GM12878 (cell line): ENCODE measurements at regions of chr9 and their contacts with region 1.

Region 1: GRCh38 chr9:4740638-4741364 is at the start of gene AK3:
- DNase-seq: no peak
- ATAC-seq: peak; percentile 94
- H3K4me3 ChIP-seq: peak within 1 kb of the TSS; percentile 92
- H3K27ac ChIP-seq: peak within 1 kb of the TSS; percentile 80
- H3K4me1 ChIP-seq: peaks cover 8% of the 10 kb centered on the region
- H3K27me3 ChIP-seq: no peaks in the 10 kb centered on the region
- CTCF ChIP-seq: peak in 2 of 3 experiments; percentile 9 to 54; a peak in 3 of 6 replicates
- EP300 ChIP-seq: no peak
- POLR2A ChIP-seq: peak; percentile 92
- RAD21 ChIP-seq: peak; percentile 34; the same call in 1 of the 2 replicates
- polyA plus RNA-seq, gene AK3: 14.2 to 26.2 TPM

Region 2: DNA sequence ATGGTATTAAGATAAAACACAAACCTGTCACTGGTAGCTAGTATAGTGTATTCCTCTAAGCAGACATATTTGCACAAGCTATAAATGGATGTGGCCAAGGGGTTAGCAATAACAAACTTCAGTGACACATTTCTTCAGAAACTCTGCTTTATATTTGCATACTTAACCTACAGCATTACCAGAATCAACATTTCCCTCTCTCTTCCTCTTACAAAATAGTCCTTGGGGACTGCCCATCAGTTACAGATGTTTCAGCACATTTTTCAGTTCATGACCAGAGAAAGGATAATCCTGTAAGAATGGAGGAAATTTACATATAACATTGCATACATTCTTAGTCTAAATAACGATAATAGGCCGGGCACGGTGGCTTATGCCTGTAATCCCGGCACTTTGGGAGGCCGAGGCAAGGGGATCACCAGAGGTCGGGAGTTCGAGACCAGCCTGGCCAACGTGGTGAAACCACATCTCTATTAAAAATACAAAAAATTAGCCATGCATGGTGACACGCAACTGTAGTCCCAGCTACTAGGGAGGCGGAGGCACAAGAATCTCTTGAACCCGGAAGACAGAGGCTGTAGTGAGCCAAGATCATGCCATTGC is 275.8 kb before region 1 on chr9:
- CTCF ChIA-PET with region 1: no interaction called
- POLR2A ChIA-PET with region 1: no interaction called
- RAD21 ChIA-PET with region 1: no interaction called
- SMC1A ChIA-PET with region 1: no interaction called
- in situ Hi-C with region 1: no loop called
- intact Hi-C with region 1: loop called (anchors 2 kb)
- DNase-seq: peak; percentile 96
- ATAC-seq: peak; percentile 97
- H3K4me3 ChIP-seq: peak overlapping the region; percentile 25; the same call in 1 of the 2 replicates
- H3K27ac ChIP-seq: peak overlapping the region; percentile 98
- H3K4me1 ChIP-seq: peaks cover 21% of the 10 kb centered on the region; the same call in 1 of the 2 replicates
- H3K27me3 ChIP-seq: no peaks in the 10 kb centered on the region
- CTCF ChIP-seq: no peak
- EP300 ChIP-seq: peak; percentile 95 to 98
- POLR2A ChIP-seq: no peak
- RAD21 ChIP-seq: no peak

Region 3: DNA sequence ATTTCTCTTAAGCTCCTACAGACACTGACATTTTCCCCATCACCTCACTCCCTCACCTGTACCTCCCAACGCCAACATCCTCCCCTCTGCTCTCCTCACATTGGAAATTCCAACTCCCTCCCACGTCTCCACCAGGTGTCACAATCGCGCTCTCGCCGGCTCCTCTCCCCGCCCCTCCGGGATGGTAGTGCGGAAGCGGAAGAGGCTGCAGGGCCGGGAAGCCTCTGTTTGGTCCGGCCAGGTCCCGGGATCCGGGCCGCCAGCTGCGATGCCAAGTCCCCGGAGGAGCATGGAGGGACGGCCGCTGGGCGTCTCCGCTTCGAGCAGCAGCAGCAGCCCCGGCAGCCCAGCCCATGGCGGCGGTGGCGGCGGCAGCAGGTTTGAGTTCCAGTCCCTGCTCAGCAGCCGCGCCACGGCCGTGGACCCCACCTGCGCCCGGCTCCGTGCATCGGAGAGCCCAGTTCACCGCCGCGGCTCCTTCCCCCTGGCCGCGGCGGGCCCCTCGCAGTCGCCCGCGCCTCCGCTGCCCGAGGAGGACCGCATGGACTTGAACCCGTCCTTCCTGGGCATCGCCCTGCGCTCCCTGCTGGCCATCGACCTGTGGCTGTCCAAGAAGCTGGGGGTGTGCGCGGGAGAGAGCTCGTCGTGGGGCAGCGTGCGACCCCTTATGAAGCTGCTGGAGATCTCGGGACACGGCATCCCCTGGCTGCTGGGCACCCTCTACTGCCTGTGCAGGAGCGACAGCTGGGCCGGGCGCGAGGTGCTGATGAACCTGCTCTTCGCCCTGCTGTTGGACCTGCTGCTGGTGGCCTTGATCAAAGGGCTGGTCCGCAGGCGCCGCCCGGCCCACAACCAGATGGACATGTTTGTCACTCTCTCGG is 78.5 kb before region 1 on chr9 and contains the start of gene PLPP6:
- CTCF ChIA-PET with region 1: interaction called, 14 read pairs
- POLR2A ChIA-PET with region 1: interaction called, 4 read pairs
- RAD21 ChIA-PET with region 1: interaction called, 11 read pairs
- SMC1A ChIA-PET with region 1: interaction called, 6 read pairs
- in situ Hi-C with region 1: no loop called
- intact Hi-C with region 1: no loop called
- DNase-seq: peak; percentile 52
- ATAC-seq: peak; percentile 91
- H3K4me3 ChIP-seq: peak within 1 kb of the TSS; percentile 85
- H3K27ac ChIP-seq: peak within 1 kb of the TSS; percentile 68
- H3K4me1 ChIP-seq: peaks cover 21% of the 10 kb centered on the region
- H3K27me3 ChIP-seq: no peaks in the 10 kb centered on the region
- CTCF ChIP-seq: peak; percentile 52 to 85 (median 61)
- EP300 ChIP-seq: no peak
- POLR2A ChIP-seq: peak; percentile 90
- RAD21 ChIP-seq: peak; percentile 65
- polyA plus RNA-seq, gene PLPP6: 1.6 to 3.5 TPM

Region 4: DNA sequence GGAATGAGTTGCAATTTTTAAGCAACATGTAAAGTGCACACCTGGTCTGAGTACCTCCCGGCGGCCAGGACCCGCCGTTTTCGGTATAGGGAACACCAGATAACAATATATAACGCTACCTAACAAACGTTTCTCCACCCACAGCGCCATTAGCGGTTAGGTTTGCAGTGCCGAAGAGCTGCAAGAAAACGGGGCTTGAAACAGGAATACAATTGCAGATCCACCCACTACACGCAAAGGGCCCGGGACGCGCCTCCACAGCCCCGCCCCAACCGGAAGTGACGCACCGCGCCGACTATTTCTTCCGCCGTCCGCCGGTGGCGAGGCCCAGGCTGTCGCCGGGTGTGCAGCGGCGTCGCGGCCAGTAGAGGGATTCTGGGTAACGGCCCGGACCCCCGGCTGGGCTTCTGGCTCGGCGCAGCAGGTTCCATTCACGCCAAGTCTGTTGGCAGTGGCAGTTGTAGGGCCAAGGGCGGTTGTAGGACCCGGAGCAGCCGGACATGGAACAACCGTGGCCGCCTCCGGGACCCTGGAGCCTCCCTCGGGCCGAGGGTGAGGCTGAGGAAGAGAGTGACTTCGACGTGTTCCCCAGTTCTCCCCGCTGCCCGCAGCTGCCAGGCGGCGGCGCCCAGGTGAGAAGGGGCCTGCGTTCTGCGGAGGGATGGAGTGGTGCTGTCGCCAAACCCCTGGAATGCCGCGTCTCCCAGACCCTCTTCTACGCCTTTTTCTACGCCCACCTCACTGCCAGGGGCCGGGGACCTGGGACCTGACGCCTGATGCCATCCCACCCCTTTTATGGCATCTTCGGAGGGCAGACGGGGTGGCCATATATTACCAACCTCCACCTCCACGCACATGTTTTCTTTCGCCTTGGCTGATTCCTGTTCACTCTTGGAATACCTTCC is 61.3 kb before region 1 on chr9 and contains the start of gene CDC37L1:
- CTCF ChIA-PET with region 1: interaction called, 6 read pairs
- POLR2A ChIA-PET with region 1: interaction called, 5 read pairs
- RAD21 ChIA-PET with region 1: interaction called, 7 read pairs
- SMC1A ChIA-PET with region 1: interaction called, 4 read pairs
- in situ Hi-C with region 1: no loop called
- intact Hi-C with region 1: loop called (anchors 2 kb)
- DNase-seq: peak; percentile 83
- ATAC-seq: peak; percentile 94
- H3K4me3 ChIP-seq: peak within 1 kb of the TSS; percentile 89
- H3K27ac ChIP-seq: peak within 1 kb of the TSS; percentile 96
- H3K4me1 ChIP-seq: peaks cover 3% of the 10 kb centered on the region; the same call in 1 of the 2 replicates
- H3K27me3 ChIP-seq: no peaks in the 10 kb centered on the region
- CTCF ChIP-seq: peak; percentile 44 to 66 (median 60); a peak in 5 of 6 replicates
- EP300 ChIP-seq: no peak
- POLR2A ChIP-seq: peak; percentile 97
- RAD21 ChIP-seq: peak; percentile 21; the same call in 1 of the 2 replicates
- polyA plus RNA-seq, gene CDC37L1: 2.2 to 3.6 TPM

Region 5: GRCh38 chr9:4689687-4690104 is 51.1 kb before region 1 on chr9:
- CTCF ChIA-PET with region 1: no interaction called
- POLR2A ChIA-PET with region 1: no interaction called
- RAD21 ChIA-PET with region 1: no interaction called
- SMC1A ChIA-PET with region 1: interaction called, 5 read pairs
- in situ Hi-C with region 1: no loop called
- intact Hi-C with region 1: loop called (anchors 2 kb)
- DNase-seq: peak; percentile 51
- ATAC-seq: peak; percentile 63
- H3K4me3 ChIP-seq: peak overlapping the region; percentile 18; the same call in 1 of the 2 replicates
- H3K27ac ChIP-seq: peak overlapping the region; percentile 70
- H3K4me1 ChIP-seq: peaks cover 12% of the 10 kb centered on the region
- H3K27me3 ChIP-seq: no peaks in the 10 kb centered on the region
- CTCF ChIP-seq: no peak
- EP300 ChIP-seq: 0 out of 4 replicates have a peak, but pooled peaks of 1 of the 2 experiments have one; percentile 23
- POLR2A ChIP-seq: no peak
- RAD21 ChIP-seq: no peak